ENCODE measurements at regions of chr15 and their contacts with region 1.

Region 1: GRCh38 chr15:56918046-56918938 is at the start of gene TCF12:
- DNase-seq: peak; percentile 88
- H3K4me3 Mint-ChIP-seq: peak within 1 kb of the TSS; percentile 92
- H3K27ac Mint-ChIP-seq: peak within 1 kb of the TSS; percentile 76
- H3K4me1 Mint-ChIP-seq: peaks cover 25% of the 10 kb centered on the region
- H3K27me3 Mint-ChIP-seq: no peaks in the 10 kb centered on the region
- total RNA-seq, gene TCF12: 70.7 and 72.8 TPM in 2 replicates

Region 2: DNA sequence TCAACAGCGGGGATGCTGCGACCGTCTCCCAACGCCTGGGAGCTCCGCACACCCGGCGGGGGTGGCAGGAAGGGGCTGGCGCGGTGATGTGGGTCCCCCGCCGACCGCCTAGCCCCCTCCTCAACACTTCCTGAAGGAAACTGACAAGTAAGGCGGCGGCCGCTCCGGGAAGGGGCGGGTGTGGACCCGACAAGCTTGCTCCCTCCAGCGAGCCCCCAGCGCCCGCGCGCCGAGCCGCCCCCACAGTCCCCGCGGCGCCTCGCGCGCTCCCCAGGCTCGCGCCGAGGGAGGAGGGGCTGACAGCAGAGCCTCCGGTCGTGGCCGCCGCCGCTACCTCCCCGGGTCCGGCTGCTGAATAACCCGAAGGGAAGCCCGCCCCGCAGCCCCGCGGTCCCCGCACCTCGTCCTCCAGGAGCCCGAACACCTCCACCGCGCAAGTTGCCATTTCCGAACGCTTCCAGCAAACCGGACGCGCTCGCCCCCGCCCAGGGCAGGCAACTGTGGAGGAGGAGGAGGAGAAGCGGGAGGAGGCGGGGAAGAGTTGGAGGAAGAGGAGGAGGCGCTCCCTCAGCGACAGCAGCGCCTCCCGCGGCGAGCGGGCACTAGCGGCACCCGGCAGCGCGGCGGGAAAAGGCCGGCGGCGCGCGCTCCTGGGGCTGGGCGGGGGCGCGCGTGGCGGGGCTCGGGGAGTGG is 925.0 kb before region 1 on chr15 and contains the start of gene NEDD4:
- intact Hi-C with region 1: loop called (anchors 10 kb)
- DNase-seq: peak; percentile 68
- H3K4me3 Mint-ChIP-seq: peak within 1 kb of the TSS; percentile 85
- H3K27ac Mint-ChIP-seq: peak within 1 kb of the TSS; percentile 12
- H3K4me1 Mint-ChIP-seq: peaks cover 13% of the 10 kb centered on the region
- H3K27me3 Mint-ChIP-seq: peaks cover 34% of the 10 kb centered on the region
- total RNA-seq, gene NEDD4: 10.2 and 13.9 TPM in 2 replicates

Region 3: GRCh38 chr15:56886932-56887781 is 31.1 kb before region 1 on chr15:
- intact Hi-C with region 1: loop called (anchors 1 kb)
- DNase-seq: peak; percentile 78
- H3K4me3 Mint-ChIP-seq: peak overlapping the region; percentile 77
- H3K27ac Mint-ChIP-seq: peak overlapping the region; percentile 34
- H3K4me1 Mint-ChIP-seq: peaks cover 19% of the 10 kb centered on the region
- H3K27me3 Mint-ChIP-seq: peaks cover 9% of the 10 kb centered on the region

Region 4: DNA sequence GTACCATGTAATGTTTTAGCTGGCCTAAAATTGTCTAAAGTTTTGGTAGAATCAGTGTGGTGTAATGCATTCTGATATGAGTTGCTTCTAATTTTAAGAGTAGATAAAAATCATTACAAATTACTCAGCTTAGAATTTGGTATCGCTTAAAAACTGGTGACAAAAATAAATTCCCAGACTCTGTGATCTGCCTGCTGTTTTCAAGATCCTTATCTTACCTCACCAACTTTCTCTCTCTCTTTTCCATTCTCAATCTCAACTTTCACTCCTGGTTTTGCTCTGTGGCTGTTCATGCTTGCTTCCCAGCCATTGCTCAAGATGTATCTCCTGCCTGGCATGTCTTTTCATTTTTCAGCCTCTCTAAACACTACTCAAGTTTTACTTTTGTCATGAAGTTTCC is 45.9 kb after region 1 on chr15:
- intact Hi-C with region 1: loop called (anchors 2 kb)
- DNase-seq: no peak
- H3K4me3 Mint-ChIP-seq: no peak overlapping the region
- H3K27ac Mint-ChIP-seq: no peak overlapping the region
- H3K4me1 Mint-ChIP-seq: peaks cover 20% of the 10 kb centered on the region
- H3K27me3 Mint-ChIP-seq: peaks cover 7% of the 10 kb centered on the region

Region 5: GRCh38 chr15:57138349-57138788 is 220.1 kb after region 1 on chr15:
- intact Hi-C with region 1: loop called (anchors 1 kb)
- DNase-seq: no peak
- H3K4me3 Mint-ChIP-seq: no peak overlapping the region
- H3K27ac Mint-ChIP-seq: no peak overlapping the region
- H3K4me1 Mint-ChIP-seq: peaks cover 20% of the 10 kb centered on the region
- H3K27me3 Mint-ChIP-seq: no peaks in the 10 kb centered on the region

Measured in activated T-helper 2 cell treated with anti-CD3 and anti-CD28 coated beads, Interferon-gamma antibody, Interleukin-2, Interleukin-4, amounts not matched to agents 10 μg/mL and 5 μg/mL and 100 μg/mL, durations not matched to agents 14 hours and 24 hours and 36 hours (primary cell).